ENCODE measurements at regions of chr5 and their contacts with region 1.

Region 1: DNA sequence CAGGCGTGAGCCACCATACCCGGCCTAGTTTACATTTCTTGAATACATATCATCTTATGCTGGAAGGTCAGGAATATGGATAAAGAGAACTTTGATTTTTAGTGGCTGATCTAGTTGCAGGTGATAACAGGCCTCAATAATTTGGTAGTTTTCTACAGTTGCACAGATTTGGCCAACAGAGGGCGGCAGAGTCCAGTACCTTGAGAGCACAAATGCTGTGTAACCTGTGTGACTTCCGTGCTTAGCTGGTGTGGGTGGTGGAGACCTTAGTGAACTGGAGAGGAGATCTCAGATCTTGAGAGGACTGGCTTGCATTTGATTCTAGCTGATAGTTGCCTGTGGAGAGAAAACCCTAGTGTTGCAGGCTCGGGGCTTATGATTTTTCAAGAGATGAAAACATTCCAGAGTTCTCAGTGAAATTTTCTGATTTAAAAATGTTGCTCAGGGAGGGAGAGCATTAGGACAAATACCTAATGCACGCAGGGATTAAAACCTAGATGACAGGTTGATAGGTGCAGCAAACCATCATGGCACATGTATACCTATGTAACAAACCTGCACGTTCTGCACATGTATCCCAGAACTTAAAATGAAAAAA is 17.4 kb upstream of the GPR151 start:
- DNase-seq: peak; percentile 81
- H3K4me3 ChIP-seq: no peak overlapping the region
- H3K27ac ChIP-seq: no peak overlapping the region
- H3K4me1 ChIP-seq: no peaks in the 10 kb centered on the region
- CTCF ChIP-seq: peak; percentile 90

Region 2: DNA sequence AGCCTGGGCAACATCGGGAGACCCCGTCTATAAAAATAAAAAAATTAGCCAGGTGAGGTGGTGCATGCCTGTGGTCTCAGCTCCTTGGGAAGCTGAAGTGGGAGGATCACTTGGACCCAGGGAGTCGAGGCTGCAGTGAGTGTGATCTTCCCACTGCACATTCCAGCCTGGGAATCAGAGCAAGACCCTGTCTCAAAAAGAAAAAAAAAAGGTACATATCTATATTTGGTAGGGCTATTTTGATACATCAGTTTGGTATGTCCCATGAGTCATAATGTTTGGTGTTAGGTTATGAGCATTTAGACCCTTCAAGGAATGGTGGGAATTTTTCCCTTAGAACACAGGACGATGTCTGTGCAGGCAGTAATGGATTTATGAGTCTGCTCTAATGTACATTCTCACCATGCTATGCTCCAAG is 250.0 kb before region 1 on chr5:
- CTCF ChIA-PET with region 1: no interaction called
- POLR2A ChIA-PET with region 1: no interaction called
- intact Hi-C with region 1: no loop called
- DNase-seq: no peak
- H3K4me3 ChIP-seq: no peak overlapping the region
- H3K27ac ChIP-seq: no peak overlapping the region
- H3K4me1 ChIP-seq: no peaks in the 10 kb centered on the region
- CTCF ChIP-seq: no peak

Region 3: GRCh38 chr5:147169399-147169798 is 636.0 kb after region 1 on chr5:
- CTCF ChIA-PET with region 1: no interaction called
- POLR2A ChIA-PET with region 1: interaction called, 10 read pairs
- intact Hi-C with region 1: no loop called
- DNase-seq: no peak
- H3K4me3 ChIP-seq: no peak overlapping the region
- H3K27ac ChIP-seq: no peak overlapping the region
- H3K4me1 ChIP-seq: peaks cover 16% of the 10 kb centered on the region
- CTCF ChIP-seq: no peak